WTC11 (cell line): ENCODE measurements at regions of chr1 and their contacts with region 1.

Region 1: DNA sequence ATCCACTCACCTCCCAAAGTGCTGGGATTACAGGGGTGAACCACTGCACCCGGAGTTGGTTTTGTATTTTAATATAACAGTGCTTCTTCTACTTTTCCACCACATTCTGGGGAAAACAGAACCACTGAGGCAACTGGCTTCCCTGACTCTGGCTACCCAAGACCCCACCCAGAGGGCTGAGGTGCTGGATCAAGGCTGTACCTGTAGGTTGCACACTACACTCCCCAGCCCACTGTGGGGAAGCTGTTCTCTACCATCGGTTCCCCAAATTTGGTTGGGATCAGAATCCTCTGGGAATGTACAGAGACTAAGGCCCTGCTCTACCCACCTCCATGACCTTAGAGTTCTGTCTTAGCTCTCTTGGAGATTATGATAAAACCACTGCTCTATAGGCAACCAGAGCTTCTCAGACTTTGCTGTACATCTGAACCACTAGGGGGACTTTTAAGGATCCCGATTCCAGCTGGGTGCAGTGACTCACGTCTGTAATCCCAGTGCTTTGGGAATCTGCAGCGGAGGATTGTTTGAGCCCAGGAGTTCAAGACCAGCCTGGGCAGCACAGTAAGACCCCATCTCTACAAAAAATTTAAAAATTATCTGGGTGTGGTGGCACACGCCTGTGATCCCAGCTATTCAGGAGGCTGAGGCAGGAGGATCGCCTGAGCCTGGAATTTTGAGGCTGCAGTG is 51.6 kb downstream of the GNG4 start:
- DNase-seq: no peak
- ATAC-seq: 0 out of 2 replicates have a peak, but pooled peaks have one; percentile 18
- H3K4me3 Mint-ChIP-seq: no peak overlapping the region
- H3K27ac Mint-ChIP-seq: no peak overlapping the region
- H3K4me1 Mint-ChIP-seq: peaks cover 8% of the 10 kb centered on the region; the same call in 1 of the 2 replicates
- H3K27me3 Mint-ChIP-seq: no peaks in the 10 kb centered on the region
- CTCF ChIP-seq: no peak

Region 2: DNA sequence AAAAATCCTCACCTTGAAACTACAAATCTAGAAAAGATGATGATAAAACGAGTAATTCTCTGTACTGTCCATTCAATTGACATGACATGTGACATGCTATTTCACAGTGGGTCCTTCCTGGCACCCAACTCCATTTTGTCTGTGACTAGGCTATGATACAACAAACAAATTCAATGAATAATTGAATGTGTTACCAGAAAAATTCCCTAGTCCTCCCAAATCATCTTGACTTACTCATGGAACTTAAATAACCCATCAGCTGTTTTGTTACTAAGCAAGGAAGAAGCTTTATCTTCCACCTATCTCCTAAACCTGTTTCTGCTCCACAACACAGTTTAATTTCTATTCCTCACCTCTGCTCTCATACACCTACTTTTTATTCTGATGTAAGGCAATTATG is 124.2 kb before region 1 on chr1:
- CTCF ChIA-PET with region 1: no interaction called
- POLR2A ChIA-PET with region 1: no interaction called
- DNase-seq: no peak
- ATAC-seq: no peak
- H3K4me3 Mint-ChIP-seq: no peak overlapping the region
- H3K27ac Mint-ChIP-seq: no peak overlapping the region
- H3K4me1 Mint-ChIP-seq: no peaks in the 10 kb centered on the region
- H3K27me3 Mint-ChIP-seq: no peaks in the 10 kb centered on the region
- CTCF ChIP-seq: no peak

Region 3: DNA sequence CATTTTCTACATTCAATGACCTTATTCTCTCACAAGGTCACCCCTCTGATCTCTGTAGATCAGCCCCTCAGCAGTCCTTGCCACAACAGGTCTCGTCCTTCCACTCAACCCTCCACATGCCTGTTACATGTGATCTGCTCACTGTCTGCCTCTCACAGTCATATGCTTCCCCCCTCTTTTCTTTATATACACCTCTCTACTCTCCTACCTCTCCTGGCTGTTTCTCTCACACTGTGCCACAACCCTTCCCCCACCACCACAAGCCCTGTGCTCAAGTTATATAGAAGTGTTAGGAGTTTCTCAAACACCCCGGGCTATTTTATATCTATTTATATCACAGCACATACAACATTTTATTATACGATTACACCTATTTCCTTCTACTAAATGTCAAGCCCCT is 106.4 kb before region 1 on chr1:
- CTCF ChIA-PET with region 1: no interaction called
- POLR2A ChIA-PET with region 1: no interaction called
- DNase-seq: no peak
- ATAC-seq: no peak
- H3K4me3 Mint-ChIP-seq: no peak overlapping the region
- H3K27ac Mint-ChIP-seq: no peak overlapping the region
- H3K4me1 Mint-ChIP-seq: no peaks in the 10 kb centered on the region
- H3K27me3 Mint-ChIP-seq: no peaks in the 10 kb centered on the region
- CTCF ChIP-seq: no peak

Region 4: DNA sequence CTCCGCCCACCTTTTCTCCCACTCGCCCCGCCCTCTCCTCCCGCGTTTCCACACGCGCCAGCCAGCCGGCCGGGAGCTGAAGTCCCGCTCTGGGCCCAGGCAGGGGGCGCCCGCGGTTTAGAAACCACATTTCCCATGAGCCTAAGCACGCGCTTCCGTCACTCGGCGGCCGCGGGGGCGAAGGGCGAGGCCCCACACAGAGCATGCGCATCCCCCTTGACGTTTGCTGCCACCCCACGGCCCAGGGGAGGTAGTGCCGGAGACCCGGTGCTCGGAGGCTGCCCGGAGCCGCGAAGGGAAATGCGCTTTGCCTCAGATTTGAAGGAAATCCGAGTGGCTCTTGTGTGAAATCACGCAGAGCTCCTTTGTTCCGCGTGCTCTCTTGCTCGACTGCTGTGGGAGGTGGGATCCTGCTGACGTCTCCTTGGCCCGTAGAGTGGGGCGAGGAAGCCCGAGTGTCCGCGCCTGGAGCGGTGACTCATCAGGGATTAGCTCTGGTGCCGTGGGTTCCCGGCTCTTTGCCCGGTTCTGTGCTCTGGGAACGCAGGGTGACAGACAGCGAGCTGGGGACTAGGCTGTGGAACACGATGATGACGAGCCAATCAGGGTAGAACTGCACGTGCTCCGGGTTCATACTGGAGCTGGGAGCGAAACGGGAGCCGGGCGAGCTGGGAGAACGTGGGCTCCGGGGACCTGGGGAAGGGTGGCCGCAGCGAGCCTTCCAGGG is 93.4 kb before region 1 on chr1:
- CTCF ChIA-PET with region 1: interaction called, 20 read pairs
- POLR2A ChIA-PET with region 1: interaction called, 5 read pairs
- DNase-seq: peak; percentile 100
- ATAC-seq: peak; percentile 86
- H3K4me3 Mint-ChIP-seq: peak overlapping the region; percentile 96
- H3K27ac Mint-ChIP-seq: peak overlapping the region; percentile 99
- H3K4me1 Mint-ChIP-seq: peaks cover 23% of the 10 kb centered on the region
- H3K27me3 Mint-ChIP-seq: no peaks in the 10 kb centered on the region
- CTCF ChIP-seq: no peak; the same call in 1 of the 2 replicates

Region 5: GRCh38 chr1:235545277-235545930 is 52.6 kb before region 1 on chr1:
- CTCF ChIA-PET with region 1: interaction called, 14 read pairs
- POLR2A ChIA-PET with region 1: no interaction called
- DNase-seq: no peak
- ATAC-seq: no peak
- H3K4me3 Mint-ChIP-seq: no peak overlapping the region
- H3K27ac Mint-ChIP-seq: no peak overlapping the region; the same call in 1 of the 2 replicates
- H3K4me1 Mint-ChIP-seq: peaks cover 21% of the 10 kb centered on the region
- H3K27me3 Mint-ChIP-seq: no peaks in the 10 kb centered on the region
- CTCF ChIP-seq: no peak

Region 6: DNA sequence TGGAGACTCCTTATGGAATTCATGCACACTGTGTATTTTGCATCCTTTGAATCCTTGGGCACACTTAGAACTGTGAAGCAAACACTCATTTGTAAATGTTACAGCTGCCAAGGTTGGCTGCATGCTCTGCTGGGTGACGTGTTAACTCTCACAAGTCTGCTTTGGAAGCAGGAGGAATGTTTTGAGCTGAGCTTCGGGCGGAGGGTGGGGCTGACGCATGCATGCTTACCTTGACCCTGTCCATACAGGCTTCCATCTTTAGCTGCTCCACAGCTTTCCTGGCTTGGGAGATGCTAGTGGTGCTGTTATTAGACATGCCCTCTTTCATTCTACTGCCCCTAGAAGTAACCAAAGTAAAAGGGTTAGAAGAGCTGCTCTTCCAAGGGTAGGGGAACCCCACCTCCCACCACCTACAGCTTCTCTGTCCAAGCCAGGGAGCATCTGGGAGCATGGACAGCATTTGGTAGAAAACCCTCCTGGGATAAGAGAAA is 14.5 kb before region 1 on chr1:
- CTCF ChIA-PET with region 1: interaction called, 25 read pairs
- POLR2A ChIA-PET with region 1: no interaction called
- DNase-seq: no peak
- ATAC-seq: peak; percentile 74
- H3K4me3 Mint-ChIP-seq: no peak overlapping the region
- H3K27ac Mint-ChIP-seq: no peak overlapping the region
- H3K4me1 Mint-ChIP-seq: peaks cover 3% of the 10 kb centered on the region; the same call in 1 of the 2 replicates
- H3K27me3 Mint-ChIP-seq: no peaks in the 10 kb centered on the region; the same call in 1 of the 2 replicates
- CTCF ChIP-seq: no peak

Region 7: GRCh38 chr1:235624721-235625333 is 26.8 kb after region 1 on chr1:
- CTCF ChIA-PET with region 1: interaction called, 14 read pairs
- POLR2A ChIA-PET with region 1: no interaction called
- DNase-seq: no peak
- ATAC-seq: no peak
- H3K4me3 Mint-ChIP-seq: no peak overlapping the region
- H3K27ac Mint-ChIP-seq: no peak overlapping the region
- H3K4me1 Mint-ChIP-seq: peaks cover 57% of the 10 kb centered on the region
- H3K27me3 Mint-ChIP-seq: no peaks in the 10 kb centered on the region
- CTCF ChIP-seq: no peak

Region 8: DNA sequence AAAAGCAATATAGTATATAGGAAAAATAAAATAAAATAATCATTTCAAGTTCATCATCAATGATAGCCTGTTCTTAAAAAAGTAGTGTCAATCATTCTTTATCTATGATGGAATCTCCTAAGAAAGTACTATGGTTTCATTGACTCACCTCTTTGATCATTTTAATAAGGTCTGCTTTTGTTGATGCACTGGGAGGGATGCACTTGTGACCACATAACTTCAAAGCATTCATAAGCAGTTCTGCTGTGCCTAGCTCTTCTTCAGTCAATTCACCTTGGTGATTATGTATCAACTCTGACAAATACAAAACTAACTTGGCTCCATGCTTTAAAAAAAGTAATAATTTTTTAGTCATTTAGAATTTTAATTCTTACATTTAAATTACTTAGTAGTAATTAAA is 136.3 kb after region 1 on chr1:
- CTCF ChIA-PET with region 1: interaction called, 16 read pairs
- POLR2A ChIA-PET with region 1: no interaction called
- DNase-seq: no peak
- ATAC-seq: no peak
- H3K4me3 Mint-ChIP-seq: no peak overlapping the region
- H3K27ac Mint-ChIP-seq: no peak overlapping the region
- H3K4me1 Mint-ChIP-seq: no peaks in the 10 kb centered on the region
- H3K27me3 Mint-ChIP-seq: no peaks in the 10 kb centered on the region
- CTCF ChIP-seq: no peak